CD14-positive monocyte (primary cell): ENCODE measurements at regions of chr1 and their contacts with region 1.

Region 1: DNA sequence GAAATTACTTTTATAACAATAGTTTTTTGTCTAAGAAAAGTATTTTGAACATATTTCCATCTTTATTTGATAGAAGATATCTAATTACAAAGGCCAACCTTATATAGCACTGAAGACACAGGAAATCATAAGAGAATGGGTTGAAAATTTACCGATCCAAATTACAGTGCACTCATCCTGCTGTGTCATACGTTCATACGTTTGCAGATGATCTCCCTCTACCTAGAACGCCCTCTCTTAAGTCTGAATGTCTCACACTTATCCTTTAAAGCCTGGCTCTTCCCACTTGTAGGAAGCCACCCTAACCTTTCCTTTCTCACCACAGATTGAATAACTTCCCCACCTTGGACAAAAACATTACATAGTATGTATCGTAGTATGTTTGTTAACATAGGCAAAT is 9.3 kb downstream of the ASH1L start:
- DNase-seq: no peak
- H3K4me3 ChIP-seq: no peak overlapping the region
- H3K4me3 Mint-ChIP-seq: no peak overlapping the region
- H3K27ac ChIP-seq: peak overlapping the region in 1 of 2 donors; percentile 56
- H3K27ac Mint-ChIP-seq: peak overlapping the region in 3 of 7 donors; percentile 47 to 72 (median 48)
- H3K4me1 ChIP-seq: peaks cover 7% of the 10 kb centered on the region in 2 donors
- H3K4me1 Mint-ChIP-seq: peaks cover 24% of the 10 kb centered on the region
- H3K27me3 ChIP-seq: no peaks in the 10 kb centered on the region
- H3K27me3 Mint-ChIP-seq: peaks cover 0 to 1% (median 0%) of the 10 kb centered on the region in 3 donors
- CTCF ChIP-seq: no peak

Region 2: DNA sequence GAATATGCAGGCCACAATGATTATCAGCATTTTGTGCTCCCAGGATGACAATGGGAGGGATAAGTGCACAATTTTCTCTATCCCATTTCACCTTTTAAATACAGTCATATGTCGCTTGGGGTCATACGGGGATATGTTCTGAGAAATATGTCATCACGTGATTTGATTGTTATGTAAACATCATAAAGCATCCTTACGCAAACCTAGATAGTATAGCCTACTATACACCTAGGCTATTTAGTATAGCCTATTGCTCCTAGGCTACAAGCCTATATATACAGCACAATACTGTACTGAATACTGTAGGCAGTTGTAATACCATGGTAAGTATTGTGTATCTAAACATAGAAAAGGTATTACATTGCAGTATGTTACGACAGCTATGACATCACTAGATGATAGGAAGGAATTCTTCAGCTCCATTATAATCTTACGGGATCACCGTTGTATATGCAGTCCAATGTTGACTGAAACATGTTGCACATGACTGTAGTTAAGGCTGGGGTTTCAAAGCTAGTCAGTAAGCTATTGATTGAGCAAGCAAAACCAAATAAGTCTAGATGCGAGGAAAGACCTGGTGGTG is 213.7 kb before region 1 on chr1:
- intact Hi-C with region 1: no loop called
- DNase-seq: no peak
- H3K4me3 ChIP-seq: no peak overlapping the region
- H3K4me3 Mint-ChIP-seq: no peak overlapping the region
- H3K27ac ChIP-seq: no peak overlapping the region
- H3K27ac Mint-ChIP-seq: no peak overlapping the region
- H3K4me1 ChIP-seq: no peaks in the 10 kb centered on the region
- H3K4me1 Mint-ChIP-seq: no peaks in the 10 kb centered on the region
- H3K27me3 ChIP-seq: no peaks in the 10 kb centered on the region
- H3K27me3 Mint-ChIP-seq: no peaks in the 10 kb centered on the region
- CTCF ChIP-seq: no peak

Region 3: GRCh38 chr1:155499953-155500639 is 53.3 kb before region 1 on chr1:
- intact Hi-C with region 1: loop called in 1 of 2 experiments (anchors 10 kb)
- DNase-seq: peak in 2 of 3 donors; percentile 26
- H3K4me3 ChIP-seq: no peak overlapping the region
- H3K4me3 Mint-ChIP-seq: peak overlapping the region; percentile 9 to 27
- H3K27ac ChIP-seq: peak overlapping the region in 1 of 2 donors; percentile 73
- H3K27ac Mint-ChIP-seq: peak overlapping the region; percentile 14 to 77 (median 62)
- H3K4me1 ChIP-seq: peaks cover 10 to 17% of the 10 kb centered on the region in 2 donors
- H3K4me1 Mint-ChIP-seq: peaks cover 29% of the 10 kb centered on the region
- H3K27me3 ChIP-seq: no peaks in the 10 kb centered on the region
- H3K27me3 Mint-ChIP-seq: no peaks in the 10 kb centered on the region
- CTCF ChIP-seq: no peak

Region 4: DNA sequence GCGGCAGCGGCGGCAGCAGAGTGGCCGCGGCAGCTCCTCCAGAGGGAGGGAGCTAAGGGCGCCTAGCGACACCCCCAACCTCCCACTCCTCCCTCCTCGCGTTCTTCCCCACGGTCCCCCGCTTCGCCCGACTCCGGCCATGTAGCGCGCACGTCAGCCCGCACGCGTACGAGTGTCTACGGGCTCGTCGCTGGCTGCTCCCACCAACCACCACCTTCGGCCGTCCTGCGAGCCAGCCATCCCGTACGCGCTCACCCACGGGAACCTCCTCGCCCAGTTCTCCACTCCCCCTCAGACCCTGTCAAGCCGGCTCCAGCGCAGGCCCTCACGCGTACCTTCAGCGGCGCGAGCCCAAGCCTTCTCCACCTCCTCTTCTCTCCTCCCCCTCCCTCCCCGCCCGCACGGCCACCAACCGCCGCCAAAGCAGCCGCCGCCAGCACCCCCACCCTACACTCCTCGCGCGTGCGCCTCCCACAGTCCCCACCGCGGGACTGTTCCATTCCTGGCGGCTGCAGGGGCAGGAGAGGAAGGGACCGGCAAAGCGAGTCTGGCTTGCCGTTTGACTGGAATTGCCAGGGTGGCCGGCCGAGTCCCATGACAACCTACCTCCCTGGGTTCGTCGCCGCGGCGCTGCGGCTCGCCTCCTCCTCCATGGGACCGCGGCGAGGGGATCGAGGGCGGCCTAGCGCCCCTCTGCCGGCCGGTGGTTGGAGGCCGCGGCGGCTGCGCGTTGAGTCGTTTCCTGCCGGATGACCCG is 135.2 kb after region 1 on chr1 and contains the start of gene YY1AP1:
- intact Hi-C with region 1: no loop called
- DNase-seq: peak; percentile 79 to 86 (median 84)
- H3K4me3 ChIP-seq: peak within 1 kb of the TSS; percentile 83 to 96 (median 91)
- H3K4me3 Mint-ChIP-seq: peak within 1 kb of the TSS; percentile 95 to 98
- H3K27ac ChIP-seq: peak within 1 kb of the TSS; percentile 89 to 96
- H3K27ac Mint-ChIP-seq: peak within 1 kb of the TSS; percentile 94 to 98 (median 95)
- H3K4me1 ChIP-seq: peaks cover 18 to 29% of the 10 kb centered on the region in 2 donors
- H3K4me1 Mint-ChIP-seq: peaks cover 40% of the 10 kb centered on the region
- H3K27me3 ChIP-seq: no peaks in the 10 kb centered on the region
- H3K27me3 Mint-ChIP-seq: no peaks in the 10 kb centered on the region
- CTCF ChIP-seq: no peak
- polyA plus RNA-seq, gene YY1AP1: 14.0 to 93.4 (median 24.3) TPM

Region 5: GRCh38 chr1:155706091-155706619 is 152.8 kb after region 1 on chr1:
- intact Hi-C with region 1: no loop called
- DNase-seq: no peak
- H3K4me3 ChIP-seq: no peak overlapping the region
- H3K4me3 Mint-ChIP-seq: no peak overlapping the region
- H3K27ac ChIP-seq: no peak overlapping the region
- H3K27ac Mint-ChIP-seq: no peak overlapping the region
- H3K4me1 ChIP-seq: peaks cover 0 to 4% of the 10 kb centered on the region in 2 donors
- H3K4me1 Mint-ChIP-seq: peaks cover 6% of the 10 kb centered on the region
- H3K27me3 ChIP-seq: no peaks in the 10 kb centered on the region
- H3K27me3 Mint-ChIP-seq: peaks cover 0 to 2% (median 0%) of the 10 kb centered on the region in 3 donors
- CTCF ChIP-seq: no peak